ENCODE measurements at regions of chr3 and their contacts with region 1.

Region 1: GRCh38 chr3:119498186-119498987 is at the start of gene TIMMDC1:
- DNase-seq: peak; percentile 80
- H3K4me3 ChIP-seq: peak within 1 kb of the TSS; percentile 98
- CTCF ChIP-seq: no peak

Region 2: DNA sequence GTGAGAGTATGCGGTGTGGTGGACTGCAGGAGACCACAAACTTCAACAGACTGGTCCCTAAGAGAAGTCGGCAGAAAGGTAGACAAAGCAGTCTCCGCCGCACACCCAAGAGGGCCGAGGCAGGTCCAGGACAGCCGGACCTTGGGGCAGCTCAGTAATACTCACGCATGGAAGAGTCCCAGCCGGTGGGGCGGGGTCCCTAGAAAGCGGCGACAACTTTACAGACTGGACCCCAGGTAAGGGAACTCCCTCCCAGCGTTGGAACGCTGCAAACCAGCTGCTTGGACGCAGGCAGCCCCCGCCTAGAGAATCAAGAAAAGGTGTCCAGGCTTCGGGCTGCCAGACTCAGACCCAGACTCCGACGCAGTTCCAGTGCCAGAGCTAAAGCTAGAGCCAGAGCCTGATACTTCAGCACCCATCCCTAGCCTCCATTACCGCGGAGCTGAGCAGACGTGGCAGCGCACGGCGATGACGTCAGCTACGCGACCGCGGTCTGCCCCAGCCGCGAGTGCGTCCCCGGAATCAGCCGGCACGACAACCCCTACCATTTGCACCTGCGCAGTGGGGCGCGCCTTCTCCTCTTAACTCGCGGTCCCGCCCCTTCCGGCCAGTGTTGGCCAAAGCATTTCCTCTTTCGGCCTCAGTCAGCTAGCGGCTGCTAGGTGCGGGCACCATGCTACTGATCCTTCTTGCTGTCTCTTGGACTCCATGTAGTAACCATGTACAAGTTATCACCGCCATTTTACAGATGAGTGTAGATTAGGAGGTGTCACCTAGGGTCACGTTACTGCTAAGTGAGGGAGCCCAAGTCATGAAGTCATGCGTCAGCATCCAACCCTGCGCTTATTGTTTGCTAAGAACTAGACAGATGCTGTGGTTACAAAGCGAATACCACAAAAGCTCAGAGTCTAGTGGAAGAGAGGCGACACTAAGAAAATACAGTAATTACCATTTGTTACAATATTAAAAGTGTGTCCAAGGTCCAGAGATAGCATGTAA is 34.9 kb before region 1 on chr3 and contains the start of gene TMEM39A:
- CTCF ChIA-PET with region 1: interaction called, 3 read pairs
- POLR2A ChIA-PET with region 1: interaction called, 14 read pairs
- DNase-seq: peak; percentile 89
- H3K4me3 ChIP-seq: peak within 1 kb of the TSS; percentile 94
- CTCF ChIP-seq: no peak